ENCODE measurements at regions of chr3 and their contacts with region 1.

Region 1: DNA sequence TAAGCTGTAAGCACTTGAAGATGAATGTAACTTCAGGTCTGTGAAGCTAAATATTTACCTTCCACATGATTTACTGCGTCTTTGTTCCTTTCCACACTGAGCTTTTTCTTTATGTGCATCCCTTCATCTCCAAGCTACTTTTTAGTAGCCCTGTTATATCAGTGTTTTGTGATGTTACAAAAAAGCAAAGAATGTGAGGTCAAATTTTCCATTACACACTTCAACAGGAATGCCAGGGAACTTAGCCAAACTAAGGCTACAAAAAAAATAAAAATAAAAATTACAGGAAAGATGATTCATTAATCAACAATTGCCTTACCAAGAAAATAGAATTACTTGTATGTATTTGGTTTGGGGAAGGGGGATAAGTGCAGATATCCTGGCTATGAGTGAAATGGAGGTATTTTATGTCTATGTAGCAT is 73.0 kb downstream of the FILIP1L start:
- DNase-seq: peak; percentile 24 to 93
- H3K4me3 ChIP-seq: peak overlapping the region; percentile 1; the same call in 1 of the 2 replicates
- H3K27ac ChIP-seq: peak overlapping the region; percentile 90
- H3K4me1 ChIP-seq: peaks cover 57% of the 10 kb centered on the region
- H3K27me3 ChIP-seq: no peaks in the 10 kb centered on the region
- CTCF ChIP-seq: no peak

Region 2: DNA sequence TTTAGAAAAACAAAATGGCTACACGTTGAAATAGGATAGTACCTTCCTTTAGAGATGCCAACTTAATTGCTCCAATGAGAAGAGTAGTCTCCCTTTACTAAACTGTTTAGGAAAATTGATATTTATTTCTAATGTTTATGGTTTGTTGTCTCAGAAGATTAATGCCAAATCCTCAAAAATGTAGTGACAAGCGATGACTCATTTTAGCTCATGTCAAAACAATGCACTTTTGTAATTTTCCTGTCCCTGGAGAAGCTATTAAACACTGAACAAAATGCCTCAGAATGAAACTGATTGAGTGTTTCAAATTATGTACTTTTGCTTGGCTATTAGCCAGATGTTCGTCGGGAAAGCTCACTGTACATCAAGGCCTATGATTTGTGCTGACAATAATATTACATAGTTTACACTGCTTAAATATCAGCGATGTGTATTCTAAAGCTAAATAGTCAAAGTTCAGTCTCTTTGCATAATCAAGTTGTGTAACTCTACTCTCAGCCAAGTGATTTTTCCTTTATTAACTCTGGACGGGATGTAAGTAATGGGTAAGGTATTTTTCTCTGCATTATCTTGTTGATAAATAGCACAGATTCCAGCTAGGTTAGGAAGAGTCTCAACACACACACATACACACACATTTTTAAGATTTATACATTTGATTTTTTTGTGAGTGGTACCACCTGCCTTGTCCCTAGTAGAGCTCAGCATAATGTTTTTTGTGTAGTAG is 140.0 kb before region 1 on chr3:
- CTCF ChIA-PET with region 1: no interaction called
- POLR2A ChIA-PET with region 1: interaction called, 3 read pairs
- intact Hi-C with region 1: loop called (anchors 1 kb)
- DNase-seq: peak; percentile 55 to 99
- H3K4me3 ChIP-seq: peak overlapping the region; percentile 30; the same call in 1 of the 2 replicates
- H3K27ac ChIP-seq: peak overlapping the region; percentile 93
- H3K4me1 ChIP-seq: peaks cover 58% of the 10 kb centered on the region
- H3K27me3 ChIP-seq: no peaks in the 10 kb centered on the region
- CTCF ChIP-seq: no peak

Region 3: GRCh38 chr3:99925584-99926212 is 115.6 kb before region 1 on chr3:
- CTCF ChIA-PET with region 1: interaction called, 11 read pairs
- POLR2A ChIA-PET with region 1: no interaction called
- intact Hi-C with region 1: no loop called
- DNase-seq: peak; percentile 68 to 88
- H3K4me3 ChIP-seq: no peak overlapping the region
- H3K27ac ChIP-seq: peak overlapping the region; percentile 46
- H3K4me1 ChIP-seq: peaks cover 21% of the 10 kb centered on the region
- H3K27me3 ChIP-seq: no peaks in the 10 kb centered on the region
- CTCF ChIP-seq: no peak

Region 4: DNA sequence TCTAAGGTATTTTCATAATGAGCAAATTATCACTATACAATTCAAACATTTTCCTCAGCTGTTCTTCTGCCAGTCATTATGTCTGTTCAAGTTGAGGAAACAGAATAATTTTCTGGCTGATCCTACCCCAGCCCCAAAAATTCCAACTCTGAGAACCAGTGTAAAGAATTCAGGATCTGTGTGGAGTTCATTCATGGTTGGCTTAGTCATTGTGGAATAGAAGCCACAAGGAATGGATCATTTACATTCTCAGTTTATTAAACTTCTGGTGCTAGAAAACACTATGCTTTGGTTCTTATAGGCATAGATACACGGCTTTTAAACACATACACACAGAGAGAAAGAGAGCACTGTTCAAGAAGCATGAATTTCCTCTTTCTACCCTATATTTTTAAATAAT is 89.0 kb before region 1 on chr3:
- CTCF ChIA-PET with region 1: no interaction called
- POLR2A ChIA-PET with region 1: no interaction called
- intact Hi-C with region 1: no loop called
- DNase-seq: no peak
- H3K4me3 ChIP-seq: no peak overlapping the region
- H3K27ac ChIP-seq: no peak overlapping the region
- H3K4me1 ChIP-seq: no peaks in the 10 kb centered on the region
- H3K27me3 ChIP-seq: no peaks in the 10 kb centered on the region
- CTCF ChIP-seq: no peak

Region 5: DNA sequence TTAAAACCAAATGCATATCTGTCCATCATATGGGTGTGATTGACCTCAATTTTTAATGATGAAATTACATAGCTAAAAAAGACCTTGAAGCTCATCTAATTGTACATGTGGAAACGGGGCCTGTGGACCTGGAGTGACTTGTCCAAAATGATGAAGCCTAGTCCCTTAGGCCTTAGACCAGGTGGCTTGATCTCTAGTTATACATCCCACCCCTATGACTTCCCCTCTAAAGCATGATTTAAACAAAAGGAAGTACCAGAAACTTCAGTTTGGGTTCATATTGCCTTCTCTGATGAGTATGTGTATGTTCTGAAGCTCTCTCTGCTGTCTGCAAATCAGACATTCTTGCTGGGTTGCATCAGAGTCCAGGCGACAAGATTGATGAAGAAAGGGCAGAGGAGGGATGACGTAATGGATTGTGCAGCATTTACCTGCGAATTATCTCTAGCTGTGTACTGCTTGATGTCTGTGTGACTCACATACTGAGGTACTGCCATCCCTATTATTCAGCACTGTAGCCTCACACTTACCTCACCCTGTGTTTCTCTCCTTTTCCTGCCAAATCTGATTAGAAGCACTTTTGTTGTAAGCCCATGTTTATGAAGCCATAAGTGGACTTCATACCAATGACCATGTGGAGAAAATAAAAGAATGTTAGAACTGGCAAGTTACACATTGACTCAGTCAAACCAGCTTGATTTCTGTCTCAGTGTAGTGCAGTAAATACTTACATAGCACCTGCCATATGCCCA is 38.6 kb before region 1 on chr3:
- CTCF ChIA-PET with region 1: interaction called, 8 read pairs
- POLR2A ChIA-PET with region 1: interaction called, 5 read pairs
- intact Hi-C with region 1: loop called (anchors 1 kb)
- DNase-seq: peak; percentile 79 to 100
- H3K4me3 ChIP-seq: no peak overlapping the region
- H3K27ac ChIP-seq: peak overlapping the region; percentile 60
- H3K4me1 ChIP-seq: peaks cover 57% of the 10 kb centered on the region
- H3K27me3 ChIP-seq: no peaks in the 10 kb centered on the region
- CTCF ChIP-seq: no peak

Region 6: GRCh38 chr3:100260685-100261484 is 219.5 kb after region 1 on chr3 and contains the start of gene TBC1D23:
- CTCF ChIA-PET with region 1: no interaction called
- POLR2A ChIA-PET with region 1: no interaction called
- intact Hi-C with region 1: loop called (anchors 1 kb)
- DNase-seq: peak; percentile 100
- H3K4me3 ChIP-seq: peak within 1 kb of the TSS; percentile 78
- H3K27ac ChIP-seq: peak within 1 kb of the TSS; percentile 89
- H3K4me1 ChIP-seq: peaks cover 51% of the 10 kb centered on the region
- H3K27me3 ChIP-seq: no peaks in the 10 kb centered on the region
- CTCF ChIP-seq: 0 out of 2 replicates have a peak, but pooled peaks have one; percentile 14
- total RNA-seq, gene TBC1D23: 68.0 and 68.7 TPM in 2 replicates

Region 7: DNA sequence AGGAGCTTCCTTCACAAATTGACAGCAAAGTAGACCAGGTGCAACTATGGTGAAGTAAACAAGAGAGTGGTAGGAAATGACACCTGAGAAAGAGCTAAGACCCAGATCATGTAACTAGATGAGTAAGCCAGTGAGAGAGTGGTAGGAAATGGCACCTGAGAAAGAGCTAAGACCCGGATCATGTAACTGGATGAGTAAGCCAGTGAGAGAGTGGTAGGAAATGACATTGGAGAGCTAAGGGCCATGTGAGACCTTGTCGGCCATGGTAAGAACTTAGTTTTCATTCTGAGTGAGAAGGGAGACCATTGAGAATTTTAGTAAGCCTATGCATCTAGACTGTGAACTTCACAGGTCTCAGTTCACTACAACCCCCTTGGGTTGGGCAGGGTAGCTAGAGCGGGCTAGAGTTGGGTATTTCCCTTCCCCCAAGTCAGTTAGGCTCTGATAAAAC is 1477.1 kb after region 1 on chr3:
- CTCF ChIA-PET with region 1: no interaction called
- POLR2A ChIA-PET with region 1: no interaction called
- intact Hi-C with region 1: no loop called
- DNase-seq: peak; percentile 26 to 79
- H3K4me3 ChIP-seq: no peak overlapping the region; the same call in 1 of the 2 replicates
- H3K27ac ChIP-seq: peak overlapping the region; percentile 23
- H3K4me1 ChIP-seq: peaks cover 23% of the 10 kb centered on the region
- H3K27me3 ChIP-seq: no peaks in the 10 kb centered on the region
- CTCF ChIP-seq: no peak

Measured in PC-9 (cell line).